A673 (cell line): ENCODE measurements at regions of chr2 and their contacts with region 1.

Region 1: GRCh38 chr2:196399722-196400691 is 228.6 kb upstream of the STK17B start:
- DNase-seq: peak; percentile 92
- H3K4me3 ChIP-seq: no peak overlapping the region
- H3K27ac ChIP-seq: peak overlapping the region; percentile 98
- H3K4me1 ChIP-seq: peaks cover 39% of the 10 kb centered on the region
- H3K27me3 ChIP-seq: no peaks in the 10 kb centered on the region
- CTCF ChIP-seq: no peak

Region 2: GRCh38 chr2:196086517-196087368 is 313.3 kb before region 1 on chr2:
- CTCF ChIA-PET with region 1: no interaction called
- POLR2A ChIA-PET with region 1: interaction called, 11 read pairs
- intact Hi-C with region 1: no loop called
- DNase-seq: no peak
- H3K4me3 ChIP-seq: no peak overlapping the region
- H3K27ac ChIP-seq: no peak overlapping the region
- H3K4me1 ChIP-seq: no peaks in the 10 kb centered on the region
- H3K27me3 ChIP-seq: no peaks in the 10 kb centered on the region
- CTCF ChIP-seq: no peak